Psoas muscle (tissue), 8 donors: ENCODE measurements at regions of chr2 and their contacts with region 1.

Region 1: DNA sequence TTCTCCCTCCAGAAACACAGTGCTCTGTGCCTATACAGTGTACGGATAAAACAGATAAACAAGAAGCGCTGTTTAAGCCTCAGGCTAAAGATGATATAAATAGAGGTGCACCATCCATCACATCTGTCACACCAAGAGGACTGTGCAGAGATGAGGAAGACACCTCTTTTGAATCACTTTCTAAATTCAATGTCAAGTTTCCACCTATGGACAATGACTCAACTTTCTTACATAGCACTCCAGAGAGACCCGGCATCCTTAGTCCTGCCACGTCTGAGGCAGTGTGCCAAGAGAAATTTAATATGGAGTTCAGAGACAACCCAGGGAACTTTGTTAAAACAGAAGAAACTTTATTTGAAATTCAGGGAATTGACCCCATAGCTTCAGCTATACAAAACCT is 70.7 kb downstream of the TANK start:
- DNase-seq: no peak
- ATAC-seq: peak; percentile 80 to 94 (median 93)
- H3K4me3 ChIP-seq: no peak overlapping the region
- H3K27ac ChIP-seq: peak overlapping the region; percentile 13
- H3K4me1 ChIP-seq: peaks cover 18% of the 10 kb centered on the region
- H3K27me3 ChIP-seq: no peaks in the 10 kb centered on the region
- CTCF ChIP-seq: no peak

Region 2: DNA sequence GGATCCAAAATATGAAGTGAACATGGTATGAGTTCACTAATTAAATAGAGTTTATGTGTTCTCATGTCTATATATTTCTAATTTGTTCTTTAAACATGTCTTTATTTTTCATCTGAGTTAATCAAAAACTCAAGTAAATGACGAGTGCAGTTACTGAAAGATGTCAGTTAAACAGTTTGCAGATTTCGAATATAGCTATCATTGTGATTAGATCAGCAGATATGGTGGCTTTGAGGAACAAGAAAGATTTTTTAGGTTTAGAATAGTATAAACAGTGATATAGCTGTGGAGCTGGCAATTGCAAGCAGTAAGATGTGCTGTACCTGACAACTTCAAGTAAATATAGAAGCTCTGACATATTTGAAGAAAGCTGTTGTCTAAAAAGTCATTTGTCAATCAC is 21.1 kb before region 1 on chr2:
- intact Hi-C with region 1: loop called in 1 of 2 experiments (anchors 2 kb)
- DNase-seq: no peak
- ATAC-seq: no peak
- H3K4me3 ChIP-seq: no peak overlapping the region
- H3K27ac ChIP-seq: no peak overlapping the region
- H3K4me1 ChIP-seq: no peaks in the 10 kb centered on the region
- H3K27me3 ChIP-seq: no peaks in the 10 kb centered on the region
- CTCF ChIP-seq: no peak